Naive thymus-derived CD8-positive, alpha-beta T cell (primary cell): ENCODE measurements at regions of chr1 and their contacts with region 1.

Region 1: GRCh38 chr1:25562101-25562927 is 18.9 kb downstream of the LDLRAP1 start:
- DNase-seq: peak; percentile 61 to 99 (median 93)
- ATAC-seq: peak; percentile 75 to 83
- H3K4me3 Mint-ChIP-seq: peak overlapping the region; percentile 96 to 100 (median 99)
- H3K27ac Mint-ChIP-seq: peak overlapping the region; percentile 93 to 100 (median 99)
- H3K4me1 Mint-ChIP-seq: peaks cover 34 to 92% (median 78%) of the 10 kb centered on the region in 4 donors
- H3K27me3 Mint-ChIP-seq: no peaks in the 10 kb centered on the region

Region 2: GRCh38 chr1:25239681-25240541 is 322.4 kb before region 1 on chr1:
- POLR2A ChIA-PET with region 1: interaction called, 11 read pairs
- DNase-seq: peak; percentile 72 to 88 (median 79)
- ATAC-seq: peak; percentile 85 to 87
- H3K4me3 Mint-ChIP-seq: peak overlapping the region; percentile 86 to 97 (median 93)
- H3K27ac Mint-ChIP-seq: peak overlapping the region; percentile 93 to 98 (median 97)
- H3K4me1 Mint-ChIP-seq: peaks cover 22 to 79% (median 60%) of the 10 kb centered on the region in 4 donors
- H3K27me3 Mint-ChIP-seq: peaks cover 0 to 2% (median 0%) of the 10 kb centered on the region in 5 donors

Region 3: GRCh38 chr1:25484096-25484495 is 78.2 kb before region 1 on chr1:
- POLR2A ChIA-PET with region 1: no interaction called
- DNase-seq: no peak
- ATAC-seq: no peak
- H3K4me3 Mint-ChIP-seq: no peak overlapping the region
- H3K27ac Mint-ChIP-seq: peak overlapping the region in 5 of 10 donors; percentile 15 to 66 (median 38)
- H3K4me1 Mint-ChIP-seq: peaks cover 8 to 35% (median 13%) of the 10 kb centered on the region in 4 donors
- H3K27me3 Mint-ChIP-seq: no peaks in the 10 kb centered on the region

Region 4: GRCh38 chr1:25599969-25600610 is 37.8 kb after region 1 on chr1:
- POLR2A ChIA-PET with region 1: no interaction called
- DNase-seq: no peak
- ATAC-seq: no peak
- H3K4me3 Mint-ChIP-seq: no peak overlapping the region
- H3K27ac Mint-ChIP-seq: no peak overlapping the region
- H3K4me1 Mint-ChIP-seq: peaks cover 2 to 7% (median 3%) of the 10 kb centered on the region in 4 donors
- H3K27me3 Mint-ChIP-seq: no peaks in the 10 kb centered on the region

Region 5: DNA sequence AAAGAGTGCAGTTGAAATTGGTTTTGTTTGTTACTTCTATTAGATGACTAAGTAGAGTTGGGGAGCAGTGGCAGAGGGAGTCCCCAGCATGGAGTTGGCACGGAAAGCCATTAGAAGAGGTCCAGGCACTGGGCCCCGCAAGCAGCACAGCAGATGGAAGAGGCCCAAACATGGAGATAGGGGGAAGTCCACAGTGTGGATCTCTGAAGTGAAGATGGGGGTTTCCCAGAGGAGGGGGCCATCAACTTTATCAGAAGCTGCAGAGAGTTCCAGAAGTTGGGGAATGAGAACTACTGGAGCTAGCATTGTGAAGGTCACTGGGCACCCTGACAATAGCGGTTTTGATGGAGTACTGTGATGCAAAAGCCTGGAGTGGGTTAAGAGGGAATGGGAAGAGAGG is 405.0 kb after region 1 on chr1:
- POLR2A ChIA-PET with region 1: no interaction called
- DNase-seq: no peak
- ATAC-seq: no peak
- H3K4me3 Mint-ChIP-seq: no peak overlapping the region
- H3K27ac Mint-ChIP-seq: peak overlapping the region in 8 of 10 donors; percentile 37 to 91 (median 71)
- H3K4me1 Mint-ChIP-seq: peaks cover 24 to 60% (median 34%) of the 10 kb centered on the region in 4 donors
- H3K27me3 Mint-ChIP-seq: no peaks in the 10 kb centered on the region